ENCODE measurements at regions of chr1 and their contacts with region 1.

Region 1: DNA sequence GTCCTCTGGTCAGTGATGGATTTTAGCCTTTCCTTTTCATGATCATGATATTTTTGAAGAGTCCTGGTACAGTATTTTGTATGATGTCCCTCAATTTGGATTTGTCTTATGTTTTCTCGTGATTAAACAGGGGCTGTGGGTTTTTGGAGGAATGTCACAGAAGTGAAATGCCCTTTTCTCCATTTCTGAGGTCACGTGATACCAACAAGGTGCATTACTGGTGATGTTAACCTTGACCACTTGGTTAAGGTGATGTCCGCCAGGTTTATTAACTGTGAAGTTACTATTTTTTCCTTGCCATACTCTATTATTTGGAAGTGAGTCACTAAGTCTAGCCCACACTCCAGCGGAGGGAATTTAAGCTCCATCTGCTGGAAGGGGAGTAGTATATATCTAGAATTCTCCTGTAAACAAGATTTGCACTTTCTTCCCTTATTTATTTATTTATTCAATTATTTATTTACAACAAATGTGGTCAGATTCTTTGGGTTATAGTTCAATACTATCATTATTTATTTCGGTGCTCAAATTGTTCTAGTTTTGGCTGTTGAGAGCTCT is 123.4 kb downstream of the HIVEP3 start:
- DNase-seq: no peak
- ATAC-seq: no peak

Region 2: DNA sequence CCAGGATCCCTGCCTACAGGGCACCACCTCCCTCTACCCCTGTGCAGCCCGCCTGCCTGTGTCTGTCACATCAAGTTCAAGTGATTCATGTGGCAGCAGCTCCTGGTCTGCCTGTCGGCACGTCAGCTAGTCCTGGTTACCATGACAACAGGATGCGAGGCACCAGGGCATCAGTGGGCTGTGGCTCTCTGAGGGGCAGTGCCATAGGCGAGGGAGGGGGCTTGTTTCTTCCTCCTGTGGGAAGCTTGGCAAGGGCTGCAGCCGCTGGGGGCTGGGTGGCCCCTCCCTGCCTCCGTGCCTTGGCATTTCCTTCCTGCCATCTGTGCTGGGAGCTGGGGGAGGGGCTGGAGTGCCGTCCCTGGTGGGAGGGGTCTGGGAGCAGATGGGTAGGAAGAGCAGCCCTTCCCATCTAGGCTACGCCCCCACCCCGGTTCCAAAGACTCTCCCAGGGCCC is 390.9 kb before region 1 on chr1:
- intact Hi-C with region 1: no loop called
- DNase-seq: no peak
- ATAC-seq: peak; percentile 45

Region 3: GRCh38 chr1:41573785-41574713 is 221.2 kb before region 1 on chr1:
- intact Hi-C with region 1: loop called (anchors 10 kb)
- DNase-seq: peak; percentile 81
- ATAC-seq: peak; percentile 92

Region 4: GRCh38 chr1:41739061-41739955 is 56.0 kb before region 1 on chr1:
- intact Hi-C with region 1: no loop called
- DNase-seq: peak; percentile 79
- ATAC-seq: peak; percentile 70

Region 5: GRCh38 chr1:42646056-42646455 is 850.8 kb after region 1 on chr1:
- intact Hi-C with region 1: no loop called
- DNase-seq: no peak
- ATAC-seq: no peak

Measured in left ventricle myocardium superior (tissue), 1 donor.